ENCODE measurements at regions of chr3 and their contacts with region 1.

Region 1: DNA sequence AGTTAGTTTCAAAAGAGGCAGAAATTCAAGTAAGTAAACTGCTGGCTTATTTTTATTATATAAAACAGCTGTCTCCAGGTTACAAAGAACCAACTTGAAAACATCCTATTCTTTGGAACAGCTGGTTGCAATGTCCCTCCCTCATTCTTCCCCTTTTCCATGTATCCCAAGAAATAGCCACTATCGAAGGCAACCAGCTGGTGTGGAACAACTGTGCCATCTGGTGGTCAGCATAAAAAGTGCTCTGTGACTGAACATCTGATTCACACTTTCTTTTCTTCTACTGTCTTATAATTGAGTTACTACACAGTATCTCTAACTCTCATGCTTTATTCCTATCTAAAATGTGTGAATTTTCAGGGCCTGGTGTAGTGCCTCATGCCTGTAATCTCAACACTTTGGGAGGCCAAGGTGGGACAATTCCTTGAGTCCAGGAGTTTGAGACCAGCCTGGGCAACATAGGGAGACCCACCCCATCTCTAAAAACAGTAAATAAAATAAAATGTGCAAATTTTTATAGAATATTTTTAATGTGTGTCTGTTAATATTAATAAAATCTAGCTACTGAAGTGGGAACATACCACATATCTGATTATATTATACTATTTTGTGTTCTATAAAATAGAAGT is 9.6 kb downstream of the OSBPL11 start:
- DNase-seq: peak in 8 of 10 donors; percentile 44 to 75 (median 57)
- H3K4me3 ChIP-seq: no peak overlapping the region
- H3K27ac ChIP-seq: peak overlapping the region in 1 of 59 donors; percentile 43
- H3K27me3 ChIP-seq: no peaks in the 10 kb centered on the region
- CTCF ChIP-seq: peak; percentile 67 to 96 (median 88)

Region 2: GRCh38 chr3:124928333-124929202 is 657.1 kb before region 1 on chr3:
- intact Hi-C with region 1: loop called in 1 of 2 experiments (anchors 10 kb)
- DNase-seq: peak in 7 of 10 donors; percentile 19 to 74 (median 57)
- H3K4me3 ChIP-seq: no peak overlapping the region
- H3K27ac ChIP-seq: no peak overlapping the region
- H3K27me3 ChIP-seq: no peaks in the 10 kb centered on the region
- CTCF ChIP-seq: peak; percentile 45 to 80 (median 68)

Region 3: DNA sequence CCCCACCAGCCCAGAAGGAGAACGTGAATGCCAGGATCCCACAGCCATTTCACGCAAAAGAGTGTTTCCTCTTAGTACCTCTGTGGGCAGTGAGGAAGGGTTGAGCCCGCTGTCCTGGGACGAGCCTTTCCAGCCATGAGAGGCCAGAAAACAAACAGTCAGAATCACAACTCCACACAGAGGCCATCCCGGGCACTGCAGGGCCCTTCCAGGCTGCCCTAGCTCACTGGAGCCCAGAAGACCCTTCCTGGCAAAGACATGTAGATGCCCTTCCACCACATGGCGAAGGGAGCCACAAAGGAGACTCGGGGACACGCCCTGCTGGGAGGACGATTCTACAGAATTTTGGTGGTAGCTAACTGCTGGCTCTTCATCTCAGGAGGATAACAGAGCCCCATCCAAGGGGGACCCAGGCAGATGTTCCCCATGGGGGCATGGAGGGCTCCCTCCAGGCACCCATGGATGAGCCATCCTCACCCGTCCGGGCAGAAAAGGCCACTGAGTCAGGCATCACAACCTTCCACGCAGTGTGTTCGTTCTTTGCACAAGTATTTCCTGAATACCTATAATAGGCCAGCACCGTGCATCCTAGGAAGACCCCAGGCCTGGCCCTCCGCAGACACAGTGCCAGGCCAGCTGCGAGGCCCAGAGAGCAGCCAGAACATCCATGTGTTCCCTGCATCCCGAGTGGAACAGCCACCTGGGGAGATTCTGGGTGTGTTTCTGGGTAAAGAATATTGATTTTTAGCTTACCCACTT is 420.3 kb before region 1 on chr3:
- intact Hi-C with region 1: loop called in 1 of 2 experiments (anchors 10 kb)
- DNase-seq: no peak
- H3K4me3 ChIP-seq: no peak overlapping the region
- H3K27ac ChIP-seq: no peak overlapping the region
- H3K27me3 ChIP-seq: no peaks in the 10 kb centered on the region
- CTCF ChIP-seq: peak in 54 of 56 donors; percentile 26 to 74 (median 56)

Region 4: GRCh38 chr3:125437631-125438435 is 147.9 kb before region 1 on chr3:
- intact Hi-C with region 1: loop called in 1 of 2 experiments (anchors 10 kb)
- DNase-seq: peak; percentile 34 to 75 (median 62)
- H3K4me3 ChIP-seq: no peak overlapping the region
- H3K27ac ChIP-seq: no peak overlapping the region
- H3K27me3 ChIP-seq: no peaks in the 10 kb centered on the region
- CTCF ChIP-seq: peak; percentile 93 to 100 (median 98)

Region 5: DNA sequence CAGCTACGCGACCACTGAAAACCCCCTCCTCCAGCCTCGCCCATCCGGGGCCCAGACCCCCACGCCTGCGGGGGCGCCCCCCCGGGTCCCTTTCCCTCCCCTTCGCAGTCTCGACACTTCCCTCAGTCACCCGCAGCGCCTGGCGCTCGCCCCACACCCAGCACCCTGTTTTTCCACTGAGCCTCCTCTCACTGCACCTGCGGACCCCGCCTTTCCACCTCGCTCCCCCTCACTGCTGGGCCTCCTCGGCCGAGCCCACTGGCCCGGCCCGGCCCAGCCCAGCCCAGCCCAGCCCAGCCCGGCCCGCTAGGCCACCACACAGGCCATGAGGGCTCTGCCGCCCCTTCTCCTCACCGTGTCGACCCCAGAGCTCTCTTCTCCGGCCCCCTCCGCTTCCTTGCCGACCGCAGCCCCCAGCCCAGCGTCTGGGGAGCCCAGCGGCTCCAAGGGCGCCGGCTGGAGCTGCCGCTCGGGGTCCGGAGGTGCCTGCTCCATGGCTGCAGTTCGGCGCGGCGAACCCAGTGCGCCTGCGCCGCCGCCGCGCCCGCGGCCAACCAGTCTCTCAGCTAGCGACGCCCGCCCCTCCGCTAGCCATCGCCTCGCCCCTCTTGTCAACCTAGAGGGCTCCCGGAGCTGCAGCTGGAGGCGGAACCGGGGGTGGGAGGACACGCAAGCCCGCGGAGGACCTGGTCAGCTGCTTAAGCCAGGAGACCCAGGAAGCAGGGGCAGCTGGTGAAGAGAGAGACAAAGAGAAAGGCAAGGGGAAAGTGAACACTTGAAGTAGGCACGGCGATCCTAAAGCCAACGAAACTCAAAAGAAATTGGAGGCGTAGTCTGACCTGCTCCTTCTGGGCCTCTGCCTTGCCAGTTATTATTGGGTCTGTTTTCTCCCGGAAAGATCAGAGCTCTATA is 65.8 kb before region 1 on chr3 and contains the start of gene SNX4:
- intact Hi-C with region 1: loop called in 1 of 2 experiments (anchors 10 kb)
- DNase-seq: peak; percentile 75 to 95 (median 91)
- H3K4me3 ChIP-seq: peak within 1 kb of the TSS; percentile 68 to 94 (median 84)
- H3K27ac ChIP-seq: peak within 1 kb of the TSS; percentile 26 to 93 (median 81)
- H3K27me3 ChIP-seq: no peaks in the 10 kb centered on the region
- CTCF ChIP-seq: peak in 27 of 56 donors; percentile 9 to 47 (median 28)
- total RNA-seq, gene SNX4: 17.3 to 47.7 (median 32.4) TPM

Region 6: GRCh38 chr3:125634336-125634950 is 48.7 kb after region 1 on chr3:
- intact Hi-C with region 1: no loop called
- DNase-seq: no peak
- H3K4me3 ChIP-seq: no peak overlapping the region
- H3K27ac ChIP-seq: no peak overlapping the region
- H3K27me3 ChIP-seq: peaks cover 0 to 6% (median 0%) of the 10 kb centered on the region in 45 donors
- CTCF ChIP-seq: no peak

Region 7: GRCh38 chr3:126146525-126147146 is 560.9 kb after region 1 on chr3:
- intact Hi-C with region 1: no loop called
- DNase-seq: peak in 4 of 10 donors; percentile 15 to 24 (median 20)
- H3K4me3 ChIP-seq: no peak overlapping the region
- H3K27ac ChIP-seq: no peak overlapping the region
- H3K27me3 ChIP-seq: no peaks in the 10 kb centered on the region
- CTCF ChIP-seq: no peak